Left colon (tissue), 2 donors: ENCODE measurements at regions of chr5 and their contacts with region 1.

Region 1: GRCh38 chr5:122076664-122077365 is 1.2 kb downstream of the LOX start:
- DNase-seq: peak; percentile 64 to 83
- ATAC-seq: peak; percentile 86

Region 2: DNA sequence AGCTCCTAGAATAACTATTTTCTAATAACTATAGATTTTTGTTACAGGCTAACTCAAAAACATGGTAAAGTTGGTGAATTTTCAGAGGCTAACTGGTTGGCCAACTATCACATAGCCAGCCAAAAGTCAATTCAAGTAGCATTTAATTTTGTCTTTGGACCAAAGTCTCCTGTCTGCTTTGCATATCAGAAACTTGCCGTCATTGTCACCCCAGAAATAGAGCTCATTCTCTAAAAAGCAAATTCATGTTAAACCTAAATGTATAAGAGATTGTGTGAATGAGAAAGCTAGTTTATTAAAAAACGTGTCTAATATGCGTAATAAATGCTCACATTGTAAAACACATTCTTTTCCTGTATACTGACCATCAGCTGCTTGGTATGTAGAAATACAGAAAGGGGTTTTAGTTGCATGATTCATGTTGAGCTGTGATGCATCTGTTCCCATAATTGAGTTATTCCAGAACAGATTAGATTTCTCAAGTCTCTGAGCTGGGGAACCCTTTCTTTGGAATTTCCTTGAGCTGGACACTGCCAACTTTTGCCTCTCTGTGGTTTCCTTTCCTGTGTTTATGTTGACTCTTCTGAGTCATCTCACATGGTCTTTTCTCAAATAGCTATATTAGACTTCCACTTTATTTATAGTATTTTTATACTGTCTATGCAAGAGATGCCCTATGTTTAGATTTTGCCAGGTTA is 107.8 kb before region 1 on chr5:
- intact Hi-C with region 1: loop called in 1 of 2 experiments (anchors 5 kb)
- DNase-seq: no peak
- ATAC-seq: no peak